CD4-positive, alpha-beta T cell (primary cell): ENCODE measurements at regions of chr7 and their contacts with region 1.

Region 1: DNA sequence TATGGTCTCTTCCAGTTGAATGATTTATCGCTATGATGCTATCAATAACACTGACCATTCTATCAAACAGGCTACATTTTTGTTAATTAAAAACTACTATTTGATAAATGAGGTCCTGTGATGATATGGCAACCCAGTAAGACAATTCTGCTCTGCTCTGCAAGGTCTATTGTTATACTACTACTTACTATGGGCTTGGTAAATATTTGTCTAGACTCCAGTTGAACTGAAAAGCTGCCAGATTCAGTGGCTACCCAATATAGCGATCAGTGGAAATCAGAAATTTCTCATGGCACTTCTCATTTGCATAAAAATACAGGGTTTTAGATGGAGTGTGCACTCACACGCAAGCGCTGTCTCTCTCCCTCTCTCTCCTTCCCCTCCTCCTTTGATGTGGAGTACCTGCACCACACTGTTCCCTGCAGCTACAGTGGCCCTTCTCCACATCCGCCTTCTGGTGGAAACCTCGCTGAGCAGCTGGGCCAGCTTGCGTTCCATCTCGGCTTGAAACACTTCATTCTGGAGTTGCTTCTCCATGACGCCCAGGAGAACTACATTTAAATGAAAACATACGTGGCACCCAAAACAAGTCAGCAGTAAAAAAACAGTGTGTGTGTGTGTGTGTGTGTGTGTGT is 77.9 kb downstream of the KIAA1549 start:
- DNase-seq: peak; percentile 58 to 93 (median 68)
- ATAC-seq: peak; percentile 95
- H3K4me3 ChIP-seq: peak overlapping the region; percentile 13
- H3K4me3 Mint-ChIP-seq: peak overlapping the region; percentile 85
- H3K27ac ChIP-seq: no peak overlapping the region
- H3K27ac Mint-ChIP-seq: peak overlapping the region; percentile 70
- H3K4me1 ChIP-seq: peaks cover 24% of the 10 kb centered on the region
- H3K4me1 Mint-ChIP-seq: peaks cover 47% of the 10 kb centered on the region
- H3K27me3 ChIP-seq: no peaks in the 10 kb centered on the region
- H3K27me3 Mint-ChIP-seq: peaks cover 21% of the 10 kb centered on the region
- CTCF ChIP-seq: no peak

Region 2: GRCh38 chr7:138645290-138645689 is 258.0 kb before region 1 on chr7:
- CTCF ChIA-PET with region 1: no interaction called
- POLR2A ChIA-PET with region 1: no interaction called
- intact Hi-C with region 1: no loop called
- DNase-seq: no peak
- ATAC-seq: no peak
- H3K4me3 ChIP-seq: no peak overlapping the region
- H3K4me3 Mint-ChIP-seq: no peak overlapping the region
- H3K27ac ChIP-seq: no peak overlapping the region
- H3K27ac Mint-ChIP-seq: no peak overlapping the region
- H3K4me1 ChIP-seq: no peaks in the 10 kb centered on the region
- H3K4me1 Mint-ChIP-seq: no peaks in the 10 kb centered on the region
- H3K27me3 ChIP-seq: no peaks in the 10 kb centered on the region
- H3K27me3 Mint-ChIP-seq: no peaks in the 10 kb centered on the region
- CTCF ChIP-seq: no peak

Region 3: DNA sequence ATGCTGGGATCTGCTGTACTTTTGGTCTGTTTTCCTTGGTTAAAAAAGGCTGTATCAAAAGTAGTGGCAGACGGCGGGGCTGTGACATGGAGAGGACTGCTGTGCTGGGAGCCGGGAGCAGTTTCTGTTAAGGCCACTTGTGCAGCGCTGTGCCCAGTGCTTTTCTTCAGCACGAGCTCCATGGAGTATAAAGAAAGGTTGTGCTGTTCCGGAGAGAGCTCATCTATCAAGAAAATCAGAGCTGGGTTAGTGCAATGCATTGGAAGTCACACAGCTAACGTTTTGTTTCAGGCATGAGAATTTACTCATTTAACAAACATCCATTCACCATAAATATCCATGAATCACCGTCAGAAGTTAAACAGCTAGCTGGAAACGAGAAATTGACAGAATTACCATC is 15.9 kb after region 1 on chr7:
- CTCF ChIA-PET with region 1: interaction called, 3 read pairs
- POLR2A ChIA-PET with region 1: interaction called, 12 read pairs
- intact Hi-C with region 1: no loop called
- DNase-seq: no peak
- ATAC-seq: no peak
- H3K4me3 ChIP-seq: no peak overlapping the region
- H3K4me3 Mint-ChIP-seq: no peak overlapping the region
- H3K27ac ChIP-seq: no peak overlapping the region
- H3K27ac Mint-ChIP-seq: no peak overlapping the region
- H3K4me1 ChIP-seq: no peaks in the 10 kb centered on the region
- H3K4me1 Mint-ChIP-seq: peaks cover 11% of the 10 kb centered on the region
- H3K27me3 ChIP-seq: peaks cover 0 to 4% of the 10 kb centered on the region in 2 experiments
- H3K27me3 Mint-ChIP-seq: no peaks in the 10 kb centered on the region
- CTCF ChIP-seq: no peak